Mammary epithelial cell (primary cell): ENCODE measurements at regions of chr1 and their contacts with region 1.

Region 1: DNA sequence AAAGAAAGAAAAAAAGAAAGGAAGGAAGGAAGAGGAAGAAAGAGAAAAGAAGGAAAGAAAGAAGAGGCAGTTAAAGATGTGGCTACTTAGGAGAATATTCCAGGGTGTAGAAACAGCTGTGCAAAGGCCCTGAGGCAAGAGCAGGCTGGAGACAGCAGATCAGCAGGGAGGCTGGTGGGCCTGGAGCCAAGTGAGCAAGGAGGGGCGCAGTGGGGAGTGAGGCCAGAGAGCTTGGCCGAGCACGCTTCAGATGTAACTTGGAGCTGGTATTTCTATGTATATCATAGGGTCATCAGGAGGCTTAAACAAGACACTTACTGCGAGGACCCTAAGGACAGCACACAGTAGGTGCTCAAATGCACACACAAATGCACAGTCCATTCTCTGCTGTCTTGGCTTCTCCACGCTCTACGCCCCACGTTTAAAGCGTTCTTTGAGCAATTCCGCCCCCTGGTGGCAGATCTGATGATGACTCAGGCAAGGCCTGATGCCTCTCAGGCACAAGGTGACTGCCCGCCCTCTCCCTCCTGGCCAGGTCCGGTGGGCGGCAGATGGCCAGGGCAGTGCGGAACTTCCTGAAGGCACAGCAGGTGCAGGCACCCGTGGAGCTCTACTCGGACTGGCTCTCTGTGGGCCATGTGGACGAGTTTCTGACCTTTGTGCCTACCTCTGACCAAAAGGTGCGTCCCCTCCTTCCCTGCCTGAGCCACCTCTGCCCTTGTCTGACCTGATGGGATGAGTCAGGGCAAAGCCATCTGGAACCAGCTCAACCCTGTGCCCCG is 11.9 kb upstream of the PADI3 start:
- DNase-seq: peak; percentile 83
- H3K4me3 ChIP-seq: no peak overlapping the region
- H3K27ac ChIP-seq: no peak overlapping the region
- H3K4me1 ChIP-seq: peaks cover 37% of the 10 kb centered on the region
- H3K27me3 ChIP-seq: no peaks in the 10 kb centered on the region
- CTCF ChIP-seq: peak; percentile 78 to 79

Region 2: DNA sequence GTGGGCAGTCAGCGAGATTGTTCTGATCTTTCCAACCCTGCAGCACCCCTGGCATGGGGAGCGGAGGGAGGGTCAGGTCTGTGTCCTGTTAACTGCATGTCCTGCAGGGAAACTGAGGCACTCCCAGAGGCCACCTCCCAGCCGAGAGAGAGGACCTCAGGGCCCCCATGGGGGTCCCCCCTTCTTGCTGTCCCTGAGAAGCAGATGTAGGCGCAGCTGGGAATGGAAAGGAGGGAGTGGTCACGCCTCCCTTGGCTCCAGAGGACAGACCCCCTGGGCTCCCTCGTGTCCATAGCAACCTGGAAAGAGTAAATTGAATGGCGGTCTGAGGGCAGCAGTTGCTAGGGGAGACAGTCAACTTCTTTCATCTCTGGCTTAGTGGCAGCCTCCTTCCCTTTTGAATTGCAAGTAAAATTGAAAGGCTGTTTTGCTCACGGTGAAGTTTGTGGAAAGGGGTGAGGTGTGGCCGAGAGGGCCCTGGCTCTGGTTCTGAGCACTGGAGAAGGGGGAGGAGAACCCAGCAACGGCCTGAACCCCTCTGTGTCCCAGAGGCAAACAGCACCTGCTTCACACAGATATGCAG is 310.4 kb before region 1 on chr1:
- CTCF ChIA-PET with region 1: no interaction called
- dilution Hi-C with region 1: no loop called
- in situ Hi-C with region 1: no loop called
- intact Hi-C with region 1: loop called (anchors 1 kb)
- DNase-seq: no peak
- H3K4me3 ChIP-seq: no peak overlapping the region
- H3K27ac ChIP-seq: no peak overlapping the region
- H3K4me1 ChIP-seq: peaks cover 39% of the 10 kb centered on the region
- H3K27me3 ChIP-seq: no peaks in the 10 kb centered on the region
- CTCF ChIP-seq: no peak

Region 3: DNA sequence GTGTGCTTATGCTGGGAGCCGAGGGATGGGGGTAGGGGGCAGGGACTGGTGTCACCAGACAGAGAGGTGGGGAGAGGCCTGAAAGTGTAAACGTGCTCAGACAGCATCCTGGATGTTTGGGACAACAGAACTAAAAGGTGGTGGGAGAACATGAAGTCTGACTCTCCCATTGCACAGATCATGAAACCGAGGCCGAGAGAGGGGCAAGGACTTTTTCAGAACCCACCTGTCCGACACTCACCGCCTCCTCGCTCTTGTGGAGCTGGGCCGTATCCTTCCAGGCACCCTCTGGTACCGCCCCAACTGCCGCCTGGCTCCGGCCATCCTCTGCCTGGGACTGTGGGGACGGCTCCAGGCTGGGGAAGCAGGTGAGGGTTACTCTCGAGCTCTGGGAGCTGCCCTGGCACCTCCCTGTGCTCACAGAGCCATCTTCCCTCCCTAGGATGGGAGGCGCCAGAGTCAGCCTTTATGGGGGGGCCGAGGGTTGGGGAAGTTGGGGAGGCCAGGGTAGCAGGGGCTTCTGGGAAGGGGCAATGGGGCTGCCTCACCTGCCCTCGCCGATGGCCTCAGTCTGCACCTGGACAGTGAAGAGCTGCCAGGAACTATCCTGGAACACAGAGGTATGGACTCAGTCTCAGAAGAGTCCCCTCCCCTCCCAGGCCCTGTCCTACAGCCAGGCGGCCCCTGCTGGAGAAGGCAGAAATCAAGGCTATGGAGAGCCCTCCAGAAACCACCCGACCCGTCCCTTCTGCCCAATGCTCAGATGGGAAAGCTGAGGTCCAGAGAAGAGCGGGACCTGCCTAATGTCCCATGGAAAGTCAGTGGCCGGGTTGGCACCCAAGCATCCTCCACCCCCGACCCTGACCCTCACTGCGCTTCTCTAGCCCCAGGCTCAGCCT is 232.3 kb before region 1 on chr1:
- CTCF ChIA-PET with region 1: interaction called, 10 read pairs
- dilution Hi-C with region 1: no loop called
- in situ Hi-C with region 1: no loop called
- intact Hi-C with region 1: no loop called
- DNase-seq: no peak
- H3K4me3 ChIP-seq: no peak overlapping the region
- H3K27ac ChIP-seq: no peak overlapping the region
- H3K4me1 ChIP-seq: peaks cover 10% of the 10 kb centered on the region
- H3K27me3 ChIP-seq: no peaks in the 10 kb centered on the region
- CTCF ChIP-seq: no peak

Region 4: GRCh38 chr1:17125756-17126237 is 111.2 kb before region 1 on chr1:
- CTCF ChIA-PET with region 1: interaction called, 5 read pairs
- dilution Hi-C with region 1: no loop called
- in situ Hi-C with region 1: loop called (anchors 5 kb)
- intact Hi-C with region 1: loop called (anchors 1 kb)
- DNase-seq: peak; percentile 61
- H3K4me3 ChIP-seq: no peak overlapping the region
- H3K27ac ChIP-seq: no peak overlapping the region
- H3K4me1 ChIP-seq: peaks cover 31% of the 10 kb centered on the region
- H3K27me3 ChIP-seq: no peaks in the 10 kb centered on the region
- CTCF ChIP-seq: peak; percentile 86 to 96

Region 5: GRCh38 chr1:17215545-17215890 is 21.5 kb before region 1 on chr1:
- CTCF ChIA-PET with region 1: no interaction called
- dilution Hi-C with region 1: no loop called
- in situ Hi-C with region 1: no loop called
- intact Hi-C with region 1: loop called (anchors 1 kb)
- DNase-seq: peak; percentile 86
- H3K4me3 ChIP-seq: no peak overlapping the region
- H3K27ac ChIP-seq: peak overlapping the region; percentile 62
- H3K4me1 ChIP-seq: peaks cover 46% of the 10 kb centered on the region
- H3K27me3 ChIP-seq: no peaks in the 10 kb centered on the region
- CTCF ChIP-seq: no peak

Region 6: DNA sequence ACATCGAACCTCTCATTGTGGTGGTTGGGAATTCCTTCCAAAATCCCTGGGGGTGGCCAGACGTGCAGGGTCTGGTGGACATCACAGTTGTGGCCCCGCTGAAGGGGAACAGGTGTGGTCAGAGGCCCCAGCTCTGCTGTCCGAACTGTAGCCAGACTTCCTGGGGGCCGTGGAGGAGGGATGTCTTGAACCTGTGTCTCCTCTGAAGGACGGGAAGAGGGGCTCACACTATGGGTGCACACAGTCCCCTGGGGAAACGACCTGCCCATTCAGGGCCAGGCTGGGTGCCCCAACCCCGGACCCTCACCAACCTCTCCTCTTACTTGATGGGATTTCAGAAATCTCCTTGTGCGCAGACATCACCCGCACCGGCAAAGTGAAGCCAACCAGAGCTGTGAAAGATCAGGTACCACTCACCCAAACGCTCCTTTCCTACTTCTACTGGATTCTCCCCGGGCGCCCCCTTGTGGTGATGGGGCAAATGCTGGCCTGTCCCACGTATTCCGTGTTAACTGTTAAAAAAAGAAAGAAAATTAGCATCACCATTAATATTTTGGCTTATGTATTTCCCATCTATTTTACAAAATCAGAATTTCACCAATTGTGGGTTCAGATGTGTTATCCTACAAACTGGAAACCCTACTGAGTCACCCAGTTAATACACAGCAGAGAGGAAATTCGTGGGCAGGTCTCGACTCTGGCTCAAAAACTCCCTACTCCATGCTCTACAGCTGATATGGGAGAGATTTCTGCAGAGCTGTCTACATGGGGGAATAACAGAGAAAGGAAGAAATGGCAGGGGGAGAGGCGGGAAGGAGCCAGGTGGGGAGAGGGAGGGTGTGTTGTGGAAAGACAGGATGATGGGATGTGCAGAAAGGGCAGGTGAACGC is 99.1 kb after region 1 on chr1:
- CTCF ChIA-PET with region 1: no interaction called
- dilution Hi-C with region 1: no loop called
- in situ Hi-C with region 1: loop called (anchors 10 kb)
- intact Hi-C with region 1: loop called (anchors 1 kb)
- DNase-seq: peak; percentile 50
- H3K4me3 ChIP-seq: no peak overlapping the region
- H3K27ac ChIP-seq: no peak overlapping the region
- H3K4me1 ChIP-seq: peaks cover 11% of the 10 kb centered on the region
- H3K27me3 ChIP-seq: no peaks in the 10 kb centered on the region
- CTCF ChIP-seq: peak; percentile 93 to 94

Region 7: GRCh38 chr1:17405898-17406759 is 169.2 kb after region 1 on chr1:
- CTCF ChIA-PET with region 1: interaction called, 5 read pairs
- dilution Hi-C with region 1: no loop called
- in situ Hi-C with region 1: loop called in 1 of 2 experiments (anchors 5 kb)
- intact Hi-C with region 1: loop called (anchors 1 kb)
- DNase-seq: peak; percentile 32
- H3K4me3 ChIP-seq: no peak overlapping the region
- H3K27ac ChIP-seq: no peak overlapping the region
- H3K4me1 ChIP-seq: peaks cover 19% of the 10 kb centered on the region
- H3K27me3 ChIP-seq: no peaks in the 10 kb centered on the region
- CTCF ChIP-seq: peak; percentile 79 to 83